Gastrocnemius medialis (tissue), 4 donors: ENCODE measurements at regions of chr11 and their contacts with region 1.

Region 1: DNA sequence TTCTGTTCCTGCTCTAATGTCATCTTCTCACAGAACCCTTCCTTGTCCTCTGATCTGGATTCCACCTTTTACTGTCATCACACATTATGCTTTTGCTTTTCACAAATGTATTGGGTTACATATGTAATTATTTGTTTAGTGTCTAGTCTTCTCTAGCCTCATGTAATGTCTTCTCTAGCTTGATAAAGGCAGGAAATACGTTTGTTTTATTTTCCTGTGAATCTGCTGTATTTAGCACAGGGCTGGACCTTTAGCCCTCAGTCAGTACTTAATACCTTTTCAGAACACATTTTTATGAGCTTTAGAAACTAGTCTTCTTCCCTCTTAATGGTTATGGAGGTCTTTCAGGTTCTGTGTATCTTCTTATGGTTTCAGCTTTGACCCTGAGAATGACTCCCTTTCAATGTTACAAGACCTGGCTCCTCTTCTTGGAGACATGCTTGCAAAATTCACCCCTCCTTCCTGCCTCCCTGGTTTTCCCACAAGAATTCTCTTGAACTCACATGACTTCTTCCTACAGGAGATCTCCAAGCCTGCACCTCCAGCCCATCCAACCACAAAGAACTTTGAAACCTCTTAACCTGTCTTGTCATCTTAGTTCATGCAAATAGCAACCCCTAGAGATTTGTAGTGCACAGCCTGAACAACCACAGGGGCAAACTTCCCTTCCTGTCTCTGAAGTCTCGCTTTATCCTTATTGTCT is 132.7 kb upstream of the DDI1 start:
- DNase-seq: no peak
- ATAC-seq: no peak
- H3K4me3 ChIP-seq: no peak overlapping the region
- H3K27ac ChIP-seq: no peak overlapping the region
- H3K4me1 ChIP-seq: no peaks in the 10 kb centered on the region
- H3K27me3 ChIP-seq: no peaks in the 10 kb centered on the region
- CTCF ChIP-seq: no peak
- POLR2A ChIP-seq: no peak

Region 2: GRCh38 chr11:103202048-103202651 is 701.6 kb before region 1 on chr11:
- in situ Hi-C with region 1: no loop called
- intact Hi-C with region 1: no loop called
- DNase-seq: no peak
- ATAC-seq: no peak
- H3K4me3 ChIP-seq: no peak overlapping the region
- H3K27ac ChIP-seq: no peak overlapping the region
- H3K4me1 ChIP-seq: no peaks in the 10 kb centered on the region
- H3K27me3 ChIP-seq: no peaks in the 10 kb centered on the region
- CTCF ChIP-seq: peak in 2 of 5 experiments; percentile 7 to 23
- POLR2A ChIP-seq: no peak

Region 3: DNA sequence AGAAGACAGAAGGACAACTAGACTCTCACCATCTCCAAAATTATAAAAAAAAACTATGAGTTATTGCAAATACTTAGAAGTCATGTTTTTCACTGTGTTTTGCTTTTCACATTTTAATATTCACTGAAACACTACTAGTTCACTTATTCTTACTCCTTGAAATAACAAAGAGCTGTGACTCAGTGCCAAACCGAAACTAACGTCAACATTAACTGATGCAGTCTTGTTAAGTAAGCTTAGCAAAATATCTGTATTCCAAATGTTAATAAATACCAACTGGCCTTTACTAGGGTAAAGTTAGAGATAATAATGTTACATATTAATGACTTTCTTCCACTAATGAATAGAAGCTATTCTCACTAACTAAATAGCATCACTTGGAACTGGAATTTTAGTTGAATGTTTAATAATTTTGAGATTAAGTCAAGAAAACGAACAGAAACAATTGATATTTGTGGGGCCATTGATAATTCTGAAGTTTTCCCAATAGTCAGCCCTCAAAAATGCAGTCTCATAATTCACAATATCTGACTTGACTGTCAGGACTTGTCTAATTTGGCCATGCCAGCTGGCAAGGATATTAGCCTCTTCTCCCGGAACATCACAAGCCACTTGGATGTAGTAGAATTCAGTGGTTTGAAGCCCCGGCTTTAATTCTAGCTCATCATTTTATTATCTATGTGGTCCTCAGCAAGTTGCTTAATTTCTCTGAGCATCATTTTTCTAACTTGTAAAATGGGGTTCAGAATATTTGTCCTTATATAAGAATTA is 97.5 kb before region 1 on chr11:
- in situ Hi-C with region 1: loop called in 1 of 4 experiments (anchors 25 kb)
- intact Hi-C with region 1: no loop called
- DNase-seq: no peak
- ATAC-seq: no peak
- H3K4me3 ChIP-seq: no peak overlapping the region
- H3K27ac ChIP-seq: no peak overlapping the region
- H3K4me1 ChIP-seq: no peaks in the 10 kb centered on the region
- H3K27me3 ChIP-seq: no peaks in the 10 kb centered on the region
- CTCF ChIP-seq: no peak
- POLR2A ChIP-seq: no peak

Region 4: DNA sequence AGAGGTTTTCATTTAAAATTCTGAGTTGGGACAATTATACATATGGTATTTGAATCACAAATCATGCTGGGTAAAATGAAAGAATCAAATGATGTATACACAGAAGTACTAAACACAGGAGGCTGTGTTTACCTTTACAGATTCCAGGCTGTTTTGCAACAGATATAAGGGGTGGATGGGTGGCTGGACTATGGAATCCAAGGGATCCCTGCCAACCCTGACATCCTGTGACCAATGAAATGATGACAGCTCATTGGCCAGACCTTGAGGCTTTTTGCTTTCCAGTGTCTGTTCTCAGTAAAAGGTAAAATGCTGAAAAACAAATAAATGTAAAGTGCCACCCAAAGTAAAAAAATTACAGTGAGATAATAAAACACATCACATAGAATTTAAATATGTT is 129.4 kb after region 1 on chr11:
- in situ Hi-C with region 1: no loop called
- intact Hi-C with region 1: no loop called
- DNase-seq: no peak
- ATAC-seq: no peak
- H3K4me3 ChIP-seq: no peak overlapping the region
- H3K27ac ChIP-seq: no peak overlapping the region
- H3K4me1 ChIP-seq: no peaks in the 10 kb centered on the region
- H3K27me3 ChIP-seq: no peaks in the 10 kb centered on the region
- CTCF ChIP-seq: no peak
- POLR2A ChIP-seq: no peak